Naive thymus-derived CD8-positive, alpha-beta T cell (primary cell): ENCODE measurements at regions of chr5 and their contacts with region 1.

Region 1: GRCh38 chr5:91311697-91312501 is 71.2 kb downstream of the ARRDC3 start:
- DNase-seq: peak in 9 of 10 donors; percentile 42 to 85 (median 70)
- ATAC-seq: peak; percentile 86 to 91
- H3K4me3 Mint-ChIP-seq: peak overlapping the region; percentile 26 to 82 (median 77)
- H3K27ac Mint-ChIP-seq: peak overlapping the region; percentile 87 to 98 (median 96)
- H3K4me1 Mint-ChIP-seq: peaks cover 28 to 62% (median 47%) of the 10 kb centered on the region in 4 donors
- H3K27me3 Mint-ChIP-seq: no peaks in the 10 kb centered on the region

Region 2: GRCh38 chr5:91280362-91281269 is 31.3 kb before region 1 on chr5:
- POLR2A ChIA-PET with region 1: interaction called, 16 read pairs
- DNase-seq: peak; percentile 59 to 83 (median 70)
- ATAC-seq: peak; percentile 77 to 86
- H3K4me3 Mint-ChIP-seq: peak overlapping the region; percentile 82 to 97 (median 92)
- H3K27ac Mint-ChIP-seq: peak overlapping the region; percentile 74 to 97 (median 93)
- H3K4me1 Mint-ChIP-seq: peaks cover 18 to 32% (median 23%) of the 10 kb centered on the region in 4 donors
- H3K27me3 Mint-ChIP-seq: peaks cover 0 to 4% (median 0%) of the 10 kb centered on the region in 5 donors

Region 3: GRCh38 chr5:91366571-91366970 is 54.7 kb after region 1 on chr5:
- POLR2A ChIA-PET with region 1: interaction called, 11 read pairs
- DNase-seq: no peak
- ATAC-seq: peak in 1 of 2 donors; percentile 5
- H3K4me3 Mint-ChIP-seq: no peak overlapping the region
- H3K27ac Mint-ChIP-seq: peak overlapping the region in 1 of 10 donors; percentile 46
- H3K4me1 Mint-ChIP-seq: peaks cover 10 to 33% (median 29%) of the 10 kb centered on the region in 4 donors
- H3K27me3 Mint-ChIP-seq: no peaks in the 10 kb centered on the region